Activated B cell treated with CpG ODN at 0.5 μM for 24 hours (primary cell): ENCODE measurements at regions of chr22 and their contacts with region 1.

Region 1: DNA sequence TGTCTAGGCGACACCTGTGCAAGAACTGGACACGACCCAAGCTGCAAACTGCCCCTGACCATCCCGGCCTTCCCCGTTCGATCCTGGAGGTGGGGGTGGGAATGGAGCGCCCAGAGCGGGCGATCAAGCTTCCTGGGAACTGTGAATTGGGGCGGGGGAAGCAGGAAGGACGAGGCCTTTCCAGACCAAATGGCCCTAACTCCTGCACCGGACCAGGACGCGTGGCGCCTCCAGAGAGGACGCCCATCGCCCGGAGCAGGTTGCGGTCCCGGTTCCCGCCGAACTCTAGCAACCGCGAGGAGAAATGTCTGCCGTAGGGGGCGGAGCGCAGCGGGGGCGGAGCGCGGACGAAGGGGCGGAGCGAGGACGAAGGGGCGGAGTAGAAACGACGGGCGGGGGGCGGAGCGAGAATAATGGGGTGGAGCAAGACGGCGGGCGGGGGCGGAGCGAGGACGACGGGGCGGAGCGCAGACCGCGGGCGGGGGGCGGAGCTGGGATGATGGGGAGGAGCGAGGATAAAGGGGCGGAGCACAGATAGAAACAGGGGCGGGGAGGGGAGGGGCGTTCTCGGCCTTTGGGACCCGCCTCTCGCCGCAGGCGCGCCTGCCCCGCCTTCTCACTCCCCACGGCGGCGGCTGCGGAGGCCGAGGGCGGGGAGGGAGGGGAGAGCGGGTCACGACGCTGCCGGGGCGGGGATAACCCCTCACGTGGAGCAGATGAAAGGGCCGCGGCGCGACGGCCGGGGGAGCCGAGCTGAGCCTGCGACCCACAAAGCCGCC is at the start of gene ZNRF3:
- DNase-seq: peak; percentile 84
- ATAC-seq: peak; percentile 94
- H3K4me3 Mint-ChIP-seq: peak within 1 kb of the TSS; percentile 86
- H3K27ac Mint-ChIP-seq: peak within 1 kb of the TSS; percentile 46
- H3K4me1 Mint-ChIP-seq: peaks cover 26% of the 10 kb centered on the region
- H3K27me3 Mint-ChIP-seq: peaks cover 17% of the 10 kb centered on the region
- CTCF ChIP-seq: no peak
- total RNA-seq, gene ZNRF3: 0.51 and 0.69 TPM in 2 replicates

Region 2: GRCh38 chr22:27919222-27919941 is 963.7 kb before region 1 on chr22 and contains the start of gene PITPNB:
- CTCF ChIA-PET with region 1: no interaction called
- POLR2A ChIA-PET with region 1: interaction called, 5 read pairs
- intact Hi-C with region 1: loop called (anchors 1 kb)
- DNase-seq: peak; percentile 99
- ATAC-seq: peak; percentile 83
- H3K4me3 Mint-ChIP-seq: peak within 1 kb of the TSS; percentile 99
- H3K27ac Mint-ChIP-seq: peak within 1 kb of the TSS; percentile 99
- H3K4me1 Mint-ChIP-seq: peaks cover 56% of the 10 kb centered on the region
- H3K27me3 Mint-ChIP-seq: no peaks in the 10 kb centered on the region
- CTCF ChIP-seq: no peak
- total RNA-seq, gene PITPNB: 77.1 and 82.5 TPM in 2 replicates

Region 3: DNA sequence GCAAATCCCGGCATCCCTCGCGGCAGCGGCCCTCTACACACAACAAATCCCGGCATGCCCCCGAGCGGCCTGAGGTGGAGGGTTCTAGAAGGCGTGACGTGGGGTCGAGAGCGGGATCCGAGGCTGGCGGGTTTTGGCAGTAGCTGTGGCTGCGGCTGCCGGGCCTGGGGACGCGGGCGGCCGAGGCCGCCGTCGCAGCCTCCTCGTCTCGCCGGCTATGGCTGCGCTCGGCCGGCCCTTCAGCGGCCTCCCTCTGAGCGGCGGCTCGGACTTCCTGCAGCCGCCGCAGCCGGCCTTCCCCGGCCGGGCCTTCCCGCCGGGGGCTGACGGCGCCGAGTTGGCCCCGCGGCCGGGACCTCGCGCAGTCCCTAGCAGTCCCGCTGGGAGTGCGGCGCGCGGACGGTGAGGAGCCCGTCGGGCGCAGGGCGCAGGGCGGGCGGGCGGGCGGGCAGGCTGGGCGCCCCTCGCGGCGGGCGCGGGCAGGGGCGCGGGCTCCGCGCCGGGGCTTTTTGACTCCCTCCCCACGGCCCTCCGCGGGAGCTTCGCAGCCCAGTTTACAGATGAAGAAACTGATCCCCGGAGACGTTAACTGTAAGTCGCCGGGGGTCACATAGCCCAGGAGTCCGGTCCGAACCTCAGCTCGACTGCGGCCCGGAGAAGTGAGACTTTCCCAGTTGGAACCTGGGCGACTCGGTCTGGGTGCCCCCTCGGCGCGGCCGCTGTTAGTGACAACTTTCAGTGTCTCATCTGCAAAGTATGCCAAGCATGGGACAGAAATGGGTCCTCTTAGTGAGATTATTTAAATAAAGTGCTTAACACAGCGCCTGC is 110.2 kb before region 1 on chr22 and contains the start of gene CCDC117:
- CTCF ChIA-PET with region 1: no interaction called
- POLR2A ChIA-PET with region 1: no interaction called
- intact Hi-C with region 1: loop called (anchors 1 kb)
- DNase-seq: peak; percentile 87
- ATAC-seq: peak; percentile 91
- H3K4me3 Mint-ChIP-seq: peak within 1 kb of the TSS; percentile 91
- H3K27ac Mint-ChIP-seq: peak within 1 kb of the TSS; percentile 91
- H3K4me1 Mint-ChIP-seq: peaks cover 28% of the 10 kb centered on the region
- H3K27me3 Mint-ChIP-seq: no peaks in the 10 kb centered on the region
- CTCF ChIP-seq: no peak
- total RNA-seq, gene CCDC117: 16.3 and 21.9 TPM in 2 replicates

Region 4: DNA sequence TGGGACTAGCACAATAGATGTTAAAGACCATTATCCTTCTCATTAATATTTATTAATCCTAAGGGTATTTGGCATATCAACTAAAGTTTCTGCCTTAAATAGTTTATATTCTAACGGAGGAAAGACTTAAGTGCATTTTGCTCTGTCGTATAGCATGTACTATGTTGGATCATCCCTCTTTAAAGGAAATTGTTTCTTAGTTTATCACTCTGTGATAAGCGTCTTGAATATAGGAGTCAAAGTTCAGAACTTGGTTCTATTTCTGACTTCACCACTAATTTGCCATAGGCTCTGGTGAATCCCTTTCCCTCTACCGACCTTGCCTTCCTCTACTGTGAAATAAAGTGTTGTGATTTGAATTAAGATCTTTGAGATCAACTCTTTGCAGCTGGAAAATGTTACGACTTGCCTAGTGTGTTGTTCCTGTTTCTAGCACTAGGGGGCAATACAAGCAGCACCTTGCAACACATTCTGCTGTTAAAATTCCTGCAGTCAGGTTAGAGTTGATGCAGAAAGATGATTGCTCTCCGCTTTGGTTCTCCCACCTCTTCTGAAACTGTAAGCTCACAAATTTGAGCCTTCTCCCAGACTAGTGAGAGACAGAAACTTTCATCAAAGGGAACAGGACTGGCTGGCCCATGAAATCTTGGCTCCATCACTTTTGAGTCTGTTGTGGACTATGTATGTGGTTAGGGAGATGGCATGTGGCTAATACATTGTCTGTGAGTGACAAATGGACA is 27.5 kb before region 1 on chr22:
- CTCF ChIA-PET with region 1: no interaction called
- POLR2A ChIA-PET with region 1: interaction called, 10 read pairs
- intact Hi-C with region 1: no loop called
- DNase-seq: no peak
- ATAC-seq: peak; percentile 57
- H3K4me3 Mint-ChIP-seq: no peak overlapping the region
- H3K27ac Mint-ChIP-seq: no peak overlapping the region
- H3K4me1 Mint-ChIP-seq: no peaks in the 10 kb centered on the region
- H3K27me3 Mint-ChIP-seq: peaks cover 6% of the 10 kb centered on the region
- CTCF ChIP-seq: no peak

Region 5: GRCh38 chr22:29072193-29072978 is 189.3 kb after region 1 on chr22:
- CTCF ChIA-PET with region 1: no interaction called
- POLR2A ChIA-PET with region 1: no interaction called
- intact Hi-C with region 1: loop called (anchors 1 kb)
- DNase-seq: peak; percentile 76
- ATAC-seq: peak; percentile 99
- H3K4me3 Mint-ChIP-seq: peak overlapping the region; percentile 72
- H3K27ac Mint-ChIP-seq: no peak overlapping the region
- H3K4me1 Mint-ChIP-seq: peaks cover 25% of the 10 kb centered on the region
- H3K27me3 Mint-ChIP-seq: peaks cover 59% of the 10 kb centered on the region
- CTCF ChIP-seq: no peak

Region 6: DNA sequence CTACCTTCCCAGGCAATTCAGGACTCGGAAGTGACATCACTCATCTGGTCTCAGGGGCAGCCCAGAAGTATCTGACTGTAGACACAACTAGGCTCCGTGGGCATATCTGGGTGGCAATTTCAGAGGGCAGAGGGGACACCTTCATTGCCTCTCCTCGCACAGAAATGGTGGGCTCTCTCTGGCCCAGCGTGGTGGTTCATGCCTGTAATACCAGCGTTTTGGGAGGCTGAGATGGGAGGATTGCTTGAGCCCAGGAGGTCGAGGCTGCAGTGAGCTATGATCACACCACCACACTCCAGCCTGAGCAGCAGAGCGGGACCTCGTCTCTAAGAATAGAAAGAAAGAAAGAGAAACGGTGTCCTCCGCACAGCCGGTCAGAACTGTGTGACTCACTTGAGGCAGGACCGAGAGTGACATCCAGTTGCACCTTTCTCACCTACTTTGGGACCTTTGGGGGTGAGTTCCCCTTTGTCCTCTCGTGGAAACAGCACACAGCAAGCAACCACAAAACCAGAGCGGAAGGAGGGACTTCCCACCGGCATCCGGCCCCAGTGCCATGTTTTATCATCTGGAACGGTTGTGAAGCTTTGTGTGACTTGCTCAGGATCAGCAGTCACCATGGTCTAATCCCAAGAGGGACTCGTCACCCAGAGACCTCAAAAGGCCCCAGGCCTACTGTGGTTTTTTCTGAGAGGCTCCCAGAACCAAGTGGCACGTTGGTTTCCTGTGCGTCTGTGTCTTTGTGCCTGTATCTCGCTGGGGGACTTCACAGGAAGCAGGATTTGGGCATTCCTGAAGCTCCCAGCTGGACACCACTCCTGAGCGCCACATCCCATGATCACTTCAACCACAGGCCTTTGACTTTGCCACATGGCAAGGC is 284.2 kb after region 1 on chr22:
- CTCF ChIA-PET with region 1: no interaction called
- POLR2A ChIA-PET with region 1: no interaction called
- intact Hi-C with region 1: loop called (anchors 1 kb)
- DNase-seq: peak; percentile 69
- ATAC-seq: peak; percentile 94
- H3K4me3 Mint-ChIP-seq: peak overlapping the region; percentile 73
- H3K27ac Mint-ChIP-seq: peak overlapping the region; percentile 87
- H3K4me1 Mint-ChIP-seq: peaks cover 35% of the 10 kb centered on the region
- H3K27me3 Mint-ChIP-seq: peaks cover 41% of the 10 kb centered on the region
- CTCF ChIP-seq: no peak

Region 7: GRCh38 chr22:29883045-29883774 is 1000.1 kb after region 1 on chr22 and contains the start of gene MTMR3:
- CTCF ChIA-PET with region 1: no interaction called
- POLR2A ChIA-PET with region 1: no interaction called
- intact Hi-C with region 1: loop called (anchors 10 kb)
- DNase-seq: peak; percentile 98
- ATAC-seq: peak; percentile 82
- H3K4me3 Mint-ChIP-seq: peak within 1 kb of the TSS; percentile 92
- H3K27ac Mint-ChIP-seq: peak within 1 kb of the TSS; percentile 83
- H3K4me1 Mint-ChIP-seq: peaks cover 10% of the 10 kb centered on the region
- H3K27me3 Mint-ChIP-seq: peaks cover 3% of the 10 kb centered on the region
- CTCF ChIP-seq: no peak
- total RNA-seq, gene MTMR3: 34.8 and 36.6 TPM in 2 replicates